Activated B cell treated with CpG ODN at 0.5 μM for 24 hours (primary cell): ENCODE measurements at regions of chr1 and their contacts with region 1.

Region 1: DNA sequence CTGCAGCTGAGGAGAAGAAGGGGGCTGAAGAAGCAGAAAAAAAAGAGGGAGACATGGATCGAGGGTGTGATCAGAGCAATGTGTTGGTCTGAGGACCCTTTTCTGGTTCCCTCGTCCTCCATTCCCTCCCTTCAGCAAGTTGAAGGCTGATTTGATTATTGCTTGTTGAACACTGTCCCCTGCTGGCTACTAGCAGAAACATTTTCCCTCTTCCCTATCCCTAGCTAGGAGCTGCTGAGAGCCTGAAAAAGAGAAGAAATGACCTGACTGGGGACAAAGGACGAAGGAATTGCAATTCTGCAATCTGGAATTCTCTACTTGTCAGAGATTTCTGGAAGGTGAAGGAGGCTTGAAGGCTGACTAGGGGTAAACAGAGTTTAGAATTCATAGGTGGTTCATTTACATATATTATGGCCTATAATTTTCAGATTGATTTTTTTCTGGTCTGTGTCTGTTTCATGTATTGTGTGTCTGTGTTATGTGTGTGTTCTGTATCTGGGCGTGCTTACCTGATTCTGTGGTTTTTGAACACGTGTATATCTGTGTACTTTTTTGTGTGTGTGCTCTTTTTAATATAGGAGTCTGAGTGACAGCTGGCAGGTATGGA is 9.8 kb downstream of the NHLH1 start:
- DNase-seq: no peak
- ATAC-seq: peak; percentile 70
- H3K4me3 Mint-ChIP-seq: peak overlapping the region; percentile 33
- H3K27ac Mint-ChIP-seq: no peak overlapping the region
- H3K4me1 Mint-ChIP-seq: peaks cover 26% of the 10 kb centered on the region
- H3K27me3 Mint-ChIP-seq: no peaks in the 10 kb centered on the region
- CTCF ChIP-seq: peak; percentile 63

Region 2: DNA sequence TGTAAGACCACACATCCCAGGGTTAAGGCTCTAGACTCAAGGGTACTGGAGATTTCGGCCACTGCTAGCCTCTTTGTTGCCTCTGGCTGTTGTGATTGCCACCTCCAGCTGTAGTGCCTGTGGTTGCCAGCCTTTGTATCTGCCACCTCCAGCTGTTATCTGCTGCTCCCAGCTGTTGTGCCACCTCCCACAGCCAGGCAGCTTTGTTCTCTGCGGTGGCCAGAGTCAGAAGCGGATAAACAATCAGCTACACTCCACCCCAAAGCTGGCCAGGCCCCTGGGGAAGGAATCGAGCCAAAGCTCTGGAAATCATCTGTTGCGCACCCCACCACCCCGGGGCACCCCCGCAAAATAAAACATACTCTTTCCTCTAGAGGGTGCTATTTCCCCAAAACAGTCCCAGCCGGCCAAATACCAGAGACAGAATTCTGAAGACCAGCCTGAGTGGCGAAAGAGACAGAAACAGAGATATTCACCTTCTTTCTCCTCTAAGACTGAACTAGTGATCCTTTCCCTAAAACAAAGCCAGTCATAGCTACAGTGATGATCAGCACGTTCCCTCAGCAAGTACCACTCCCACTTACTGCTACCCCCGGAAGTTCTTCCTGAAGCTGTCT is 330.0 kb before region 1 on chr1:
- CTCF ChIA-PET with region 1: interaction called, 11 read pairs
- POLR2A ChIA-PET with region 1: no interaction called
- intact Hi-C with region 1: no loop called
- DNase-seq: no peak
- ATAC-seq: peak; percentile 79
- H3K4me3 Mint-ChIP-seq: peak overlapping the region; percentile 72
- H3K27ac Mint-ChIP-seq: peak overlapping the region; percentile 6
- H3K4me1 Mint-ChIP-seq: peaks cover 12% of the 10 kb centered on the region
- H3K27me3 Mint-ChIP-seq: peaks cover 26% of the 10 kb centered on the region
- CTCF ChIP-seq: no peak

Region 3: GRCh38 chr1:160098852-160099561 is 277.6 kb before region 1 on chr1:
- CTCF ChIA-PET with region 1: interaction called, 62 read pairs
- POLR2A ChIA-PET with region 1: interaction called, 6 read pairs
- intact Hi-C with region 1: loop called (anchors 1 kb)
- DNase-seq: peak; percentile 98
- ATAC-seq: peak; percentile 90
- H3K4me3 Mint-ChIP-seq: peak overlapping the region; percentile 84
- H3K27ac Mint-ChIP-seq: peak overlapping the region; percentile 85
- H3K4me1 Mint-ChIP-seq: peaks cover 39% of the 10 kb centered on the region
- H3K27me3 Mint-ChIP-seq: no peaks in the 10 kb centered on the region
- CTCF ChIP-seq: no peak

Region 4: DNA sequence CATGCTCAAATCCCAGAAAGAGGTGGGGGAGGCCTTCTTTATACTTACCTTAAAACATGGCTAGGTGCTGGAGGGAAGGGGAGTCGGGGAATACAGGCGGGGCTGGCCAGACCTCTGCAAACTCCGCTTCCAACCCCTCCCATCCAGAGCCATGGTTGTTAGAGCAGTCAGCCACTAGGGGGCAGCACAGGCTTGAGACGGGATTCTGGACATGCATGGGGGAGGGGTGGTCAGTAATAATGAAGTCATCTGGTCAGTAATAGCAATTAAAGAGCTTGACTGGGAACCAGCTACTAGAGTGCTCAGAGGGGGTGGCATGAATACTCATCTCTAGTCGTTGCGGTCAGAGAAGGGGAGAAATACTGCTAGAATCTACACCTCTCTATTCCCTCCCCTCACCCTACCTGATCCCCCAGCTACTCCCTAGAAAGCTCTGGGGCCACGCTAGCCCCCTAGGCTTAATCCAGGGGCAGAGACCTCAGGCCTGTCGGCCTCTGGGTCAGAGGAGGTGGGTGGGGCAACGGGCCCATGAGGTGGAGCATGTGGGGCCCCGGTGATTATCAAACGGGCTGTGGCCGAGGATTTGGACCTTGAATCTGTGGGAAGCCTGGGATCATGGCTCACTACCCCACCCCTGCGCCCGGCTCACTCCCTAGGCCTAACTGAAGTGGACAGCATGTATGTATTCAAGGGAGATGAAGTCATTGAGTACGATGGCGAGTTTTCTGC is 183.4 kb before region 1 on chr1:
- CTCF ChIA-PET with region 1: interaction called, 19 read pairs
- POLR2A ChIA-PET with region 1: no interaction called
- intact Hi-C with region 1: loop called (anchors 1 kb)
- DNase-seq: peak; percentile 72
- ATAC-seq: peak; percentile 95
- H3K4me3 Mint-ChIP-seq: no peak overlapping the region
- H3K27ac Mint-ChIP-seq: no peak overlapping the region
- H3K4me1 Mint-ChIP-seq: peaks cover 3% of the 10 kb centered on the region
- H3K27me3 Mint-ChIP-seq: no peaks in the 10 kb centered on the region
- CTCF ChIP-seq: peak; percentile 43

Region 5: DNA sequence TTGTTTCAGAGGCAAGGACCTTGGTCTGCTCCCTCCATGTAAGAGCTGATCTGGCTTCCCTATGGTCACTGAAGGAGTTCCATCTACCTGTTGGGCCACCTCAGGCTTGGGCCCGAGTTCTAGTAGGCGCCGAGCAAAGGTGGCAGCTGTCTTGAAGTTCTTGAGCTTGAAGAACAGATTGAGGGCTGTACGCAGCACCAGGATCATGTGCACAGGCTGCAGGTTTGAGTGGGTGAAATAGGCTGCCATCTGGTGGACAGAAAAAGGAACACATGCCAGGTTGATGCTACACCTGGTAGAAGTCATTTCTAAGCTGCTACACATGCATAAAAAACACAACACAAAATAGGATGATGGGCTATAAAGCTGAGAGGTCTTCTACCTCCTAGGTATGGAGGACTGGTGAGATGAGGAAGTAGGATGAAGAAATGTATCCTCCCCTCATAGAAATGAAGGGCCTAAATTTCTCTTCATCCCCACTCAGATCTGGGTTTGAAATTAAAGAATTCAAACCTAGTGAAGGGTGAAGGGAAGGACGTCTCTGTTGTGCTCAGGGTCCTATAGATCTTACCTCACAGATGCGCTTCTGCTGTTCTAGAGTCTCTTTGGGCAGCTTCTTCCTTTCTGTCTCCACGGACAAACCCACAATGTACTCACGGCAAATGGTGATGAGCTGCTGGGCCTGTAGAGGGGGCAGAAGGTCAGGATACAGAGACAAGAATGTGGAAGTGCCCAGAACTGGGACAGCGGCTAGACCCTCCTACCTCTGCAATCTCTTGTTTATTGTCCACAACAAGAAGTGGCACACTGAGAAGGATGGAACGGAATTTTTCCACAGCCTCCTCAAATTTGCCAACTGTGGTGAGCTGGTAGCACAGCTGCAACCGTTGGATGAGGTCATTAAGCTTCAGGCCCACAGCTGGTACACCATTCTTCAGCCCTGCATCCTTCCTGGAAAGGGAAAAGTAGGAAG is 85.1 kb before region 1 on chr1:
- CTCF ChIA-PET with region 1: interaction called, 63 read pairs
- POLR2A ChIA-PET with region 1: no interaction called
- intact Hi-C with region 1: loop called (anchors 1 kb)
- DNase-seq: peak; percentile 23
- ATAC-seq: peak; percentile 96
- H3K4me3 Mint-ChIP-seq: no peak overlapping the region
- H3K27ac Mint-ChIP-seq: no peak overlapping the region
- H3K4me1 Mint-ChIP-seq: peaks cover 4% of the 10 kb centered on the region
- H3K27me3 Mint-ChIP-seq: no peaks in the 10 kb centered on the region
- CTCF ChIP-seq: peak; percentile 70

Region 6: DNA sequence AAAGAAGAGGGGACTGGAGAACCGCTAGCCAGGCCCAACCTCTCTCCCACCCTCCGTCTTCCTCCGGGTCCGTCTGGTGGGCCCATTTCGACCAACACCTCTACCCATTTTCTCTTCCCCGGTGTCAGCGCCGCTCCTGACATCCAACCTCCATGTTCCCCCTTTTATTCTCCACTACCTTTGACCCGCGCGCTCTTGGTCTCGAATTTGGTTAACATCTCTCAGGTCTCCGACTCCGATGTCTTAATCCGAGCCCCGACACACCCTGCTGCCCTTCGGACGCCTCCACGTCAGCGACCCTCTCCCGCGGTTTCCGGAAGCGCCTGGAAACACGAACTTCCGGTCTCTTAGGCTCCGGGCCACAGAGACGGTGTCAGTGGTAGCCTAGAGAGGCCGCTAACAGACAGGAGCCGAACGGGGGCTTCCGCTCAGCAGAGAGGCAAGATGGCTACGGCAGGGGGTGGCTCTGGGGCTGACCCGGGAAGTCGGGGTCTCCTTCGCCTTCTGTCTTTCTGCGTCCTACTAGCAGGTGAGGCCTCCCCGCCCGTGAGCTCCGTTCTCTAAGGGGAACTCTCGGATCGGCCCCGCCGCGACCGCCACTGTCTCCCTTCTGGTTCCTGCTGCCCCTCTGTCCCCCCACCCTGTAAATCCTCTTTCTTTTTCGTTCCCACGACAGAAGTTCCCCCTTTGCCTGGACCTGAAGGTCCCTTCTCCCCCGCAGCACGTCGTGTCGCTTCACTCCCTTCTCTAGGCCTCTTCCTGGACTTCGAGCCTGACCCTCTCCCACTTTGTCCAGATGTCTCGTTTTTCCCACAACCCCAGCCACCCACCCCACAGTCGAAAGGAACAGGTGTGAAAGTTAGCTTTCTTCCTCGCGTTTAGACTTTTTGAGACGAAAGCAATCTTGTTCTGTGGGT is 33.4 kb before region 1 on chr1 and contains the starts of genes COPA and NCSTN:
- CTCF ChIA-PET with region 1: interaction called, 4 read pairs
- POLR2A ChIA-PET with region 1: interaction called, 5 read pairs
- intact Hi-C with region 1: loop called (anchors 1 kb)
- DNase-seq: peak; percentile 83
- ATAC-seq: peak; percentile 88
- H3K4me3 Mint-ChIP-seq: peak within 1 kb of the TSS; percentile 99
- H3K27ac Mint-ChIP-seq: peak within 1 kb of the TSS; percentile 98
- H3K4me1 Mint-ChIP-seq: peaks cover 68% of the 10 kb centered on the region
- H3K27me3 Mint-ChIP-seq: no peaks in the 10 kb centered on the region
- CTCF ChIP-seq: no peak
- total RNA-seq, gene COPA: 161 and 174 TPM in 2 replicates
- total RNA-seq, gene NCSTN: 108 and 118 TPM in 2 replicates

Region 7: GRCh38 chr1:160607011-160607671 is 230.5 kb after region 1 on chr1:
- CTCF ChIA-PET with region 1: interaction called, 9 read pairs
- POLR2A ChIA-PET with region 1: interaction called, 3 read pairs
- intact Hi-C with region 1: loop called (anchors 1 kb)
- DNase-seq: no peak
- ATAC-seq: peak; percentile 94
- H3K4me3 Mint-ChIP-seq: peak overlapping the region; percentile 42
- H3K27ac Mint-ChIP-seq: peak overlapping the region; percentile 84
- H3K4me1 Mint-ChIP-seq: peaks cover 33% of the 10 kb centered on the region
- H3K27me3 Mint-ChIP-seq: no peaks in the 10 kb centered on the region
- CTCF ChIP-seq: no peak